Naive thymus-derived CD4-positive, alpha-beta T cell (primary cell): ENCODE measurements at regions of chr1 and their contacts with region 1.

Region 1: GRCh38 chr1:21782868-21783678 is at the start of gene USP48:
- DNase-seq: peak; percentile 95 to 98 (median 97)
- ATAC-seq: peak; percentile 92
- H3K4me3 ChIP-seq: peak within 1 kb of the TSS; percentile 93
- H3K4me3 Mint-ChIP-seq: peak within 1 kb of the TSS; percentile 92 to 99 (median 98)
- H3K27ac ChIP-seq: peak within 1 kb of the TSS; percentile 99
- H3K27ac Mint-ChIP-seq: peak within 1 kb of the TSS; percentile 99 to 100 (median 100)
- H3K4me1 ChIP-seq: peaks cover 19 to 23% of the 10 kb centered on the region in 2 donors
- H3K4me1 Mint-ChIP-seq: peaks cover 19 to 40% (median 34%) of the 10 kb centered on the region in 7 donors
- H3K27me3 ChIP-seq: no peaks in the 10 kb centered on the region
- H3K27me3 Mint-ChIP-seq: peaks cover 0 to 9% (median 0%) of the 10 kb centered on the region in 5 donors
- total RNA-seq, gene USP48: 74.7 to 107 (median 83.9) TPM

Region 2: GRCh38 chr1:19882111-19883071 is 1900.7 kb before region 1 on chr1 and contains the start of gene OTUD3:
- CTCF ChIA-PET with region 1: no interaction called
- POLR2A ChIA-PET with region 1: no interaction called
- intact Hi-C with region 1: loop called in 1 of 2 experiments (anchors 2 kb)
- DNase-seq: peak; percentile 87 to 97 (median 96)
- ATAC-seq: peak; percentile 100
- H3K4me3 ChIP-seq: peak within 1 kb of the TSS; percentile 66
- H3K4me3 Mint-ChIP-seq: peak within 1 kb of the TSS; percentile 77 to 95 (median 88)
- H3K27ac ChIP-seq: peak within 1 kb of the TSS; percentile 82
- H3K27ac Mint-ChIP-seq: peak within 1 kb of the TSS; percentile 3 to 88 (median 75)
- H3K4me1 ChIP-seq: peaks cover 15 to 23% of the 10 kb centered on the region in 2 donors
- H3K4me1 Mint-ChIP-seq: peaks cover 20 to 50% (median 47%) of the 10 kb centered on the region in 7 donors
- H3K27me3 ChIP-seq: no peaks in the 10 kb centered on the region
- H3K27me3 Mint-ChIP-seq: peaks cover 0 to 15% (median 6%) of the 10 kb centered on the region in 5 donors
- total RNA-seq, gene OTUD3: 13.1 to 23.6 (median 20.8) TPM

Region 3: GRCh38 chr1:21659099-21659923 is 123.8 kb before region 1 on chr1:
- CTCF ChIA-PET with region 1: no interaction called
- POLR2A ChIA-PET with region 1: no interaction called
- intact Hi-C with region 1: loop called (anchors 1 to 2 kb)
- DNase-seq: peak; percentile 73 to 91 (median 81)
- ATAC-seq: peak; percentile 99
- H3K4me3 ChIP-seq: peak overlapping the region; percentile 40
- H3K4me3 Mint-ChIP-seq: peak overlapping the region in 7 of 10 donors; percentile 18 to 66 (median 42)
- H3K27ac ChIP-seq: no peak overlapping the region
- H3K27ac Mint-ChIP-seq: peak overlapping the region in 1 of 9 donors; percentile 56
- H3K4me1 ChIP-seq: peaks cover 6% of the 10 kb centered on the region in 2 donors
- H3K4me1 Mint-ChIP-seq: peaks cover 0 to 9% (median 7%) of the 10 kb centered on the region in 7 donors
- H3K27me3 ChIP-seq: no peaks in the 10 kb centered on the region
- H3K27me3 Mint-ChIP-seq: peaks cover 14 to 30% (median 16%) of the 10 kb centered on the region in 5 donors

Region 4: DNA sequence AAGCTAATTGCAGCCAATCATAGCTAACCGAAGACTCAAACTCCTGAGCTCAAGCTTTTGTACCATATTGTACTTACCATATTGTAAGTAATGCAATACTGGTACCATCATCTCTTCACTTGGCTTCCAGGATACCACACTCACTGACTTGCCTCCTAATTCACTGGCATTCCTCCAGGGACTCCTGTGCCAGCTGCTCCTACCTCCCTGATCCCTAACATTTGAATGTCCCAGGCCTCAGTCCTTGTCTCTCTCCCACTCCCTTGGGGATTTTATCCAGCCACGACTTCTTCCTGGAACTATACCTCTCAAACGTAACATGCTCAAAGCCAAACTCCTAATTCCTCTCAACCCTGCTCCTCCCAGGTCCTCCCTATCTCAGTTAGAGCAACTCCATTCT is 34.0 kb before region 1 on chr1:
- CTCF ChIA-PET with region 1: no interaction called
- POLR2A ChIA-PET with region 1: no interaction called
- intact Hi-C with region 1: loop called in 1 of 2 experiments (anchors 5 kb)
- DNase-seq: no peak
- ATAC-seq: no peak
- H3K4me3 ChIP-seq: no peak overlapping the region
- H3K4me3 Mint-ChIP-seq: no peak overlapping the region
- H3K27ac ChIP-seq: no peak overlapping the region
- H3K27ac Mint-ChIP-seq: peak overlapping the region in 2 of 9 donors; percentile 53 to 66
- H3K4me1 ChIP-seq: no peaks in the 10 kb centered on the region
- H3K4me1 Mint-ChIP-seq: peaks cover 0 to 7% (median 0%) of the 10 kb centered on the region in 7 donors
- H3K27me3 ChIP-seq: no peaks in the 10 kb centered on the region
- H3K27me3 Mint-ChIP-seq: no peaks in the 10 kb centered on the region

Region 5: GRCh38 chr1:21834094-21834493 is 51.0 kb after region 1 on chr1:
- CTCF ChIA-PET with region 1: no interaction called
- POLR2A ChIA-PET with region 1: no interaction called
- intact Hi-C with region 1: no loop called
- DNase-seq: no peak
- ATAC-seq: no peak
- H3K4me3 ChIP-seq: no peak overlapping the region
- H3K4me3 Mint-ChIP-seq: no peak overlapping the region
- H3K27ac ChIP-seq: no peak overlapping the region
- H3K27ac Mint-ChIP-seq: no peak overlapping the region
- H3K4me1 ChIP-seq: no peaks in the 10 kb centered on the region
- H3K4me1 Mint-ChIP-seq: peaks cover 0 to 2% (median 0%) of the 10 kb centered on the region in 7 donors
- H3K27me3 ChIP-seq: no peaks in the 10 kb centered on the region
- H3K27me3 Mint-ChIP-seq: no peaks in the 10 kb centered on the region

Region 6: GRCh38 chr1:21956720-21957552 is 173.9 kb after region 1 on chr1:
- CTCF ChIA-PET with region 1: interaction called, 4 read pairs
- POLR2A ChIA-PET with region 1: interaction called, 10 read pairs
- intact Hi-C with region 1: loop called in 1 of 2 experiments (anchors 1 kb)
- DNase-seq: peak; percentile 21 to 84 (median 76)
- ATAC-seq: peak; percentile 96
- H3K4me3 ChIP-seq: peak overlapping the region; percentile 43
- H3K4me3 Mint-ChIP-seq: peak overlapping the region; percentile 65 to 86 (median 80)
- H3K27ac ChIP-seq: peak overlapping the region; percentile 62
- H3K27ac Mint-ChIP-seq: peak overlapping the region; percentile 77 to 99 (median 93)
- H3K4me1 ChIP-seq: peaks cover 8 to 31% of the 10 kb centered on the region in 2 donors
- H3K4me1 Mint-ChIP-seq: peaks cover 17 to 44% (median 29%) of the 10 kb centered on the region in 7 donors
- H3K27me3 ChIP-seq: no peaks in the 10 kb centered on the region
- H3K27me3 Mint-ChIP-seq: peaks cover 0 to 7% (median 2%) of the 10 kb centered on the region in 5 donors

Region 7: GRCh38 chr1:22052115-22053016 is 269.3 kb after region 1 on chr1 and contains the start of gene CDC42:
- CTCF ChIA-PET with region 1: no interaction called
- POLR2A ChIA-PET with region 1: interaction called, 4 read pairs
- intact Hi-C with region 1: loop called (anchors 1 kb)
- DNase-seq: peak; percentile 95 to 99 (median 98)
- ATAC-seq: peak; percentile 96
- H3K4me3 ChIP-seq: peak within 1 kb of the TSS; percentile 74
- H3K4me3 Mint-ChIP-seq: peak within 1 kb of the TSS; percentile 96 to 100 (median 99)
- H3K27ac ChIP-seq: peak within 1 kb of the TSS; percentile 98
- H3K27ac Mint-ChIP-seq: peak within 1 kb of the TSS; percentile 91 to 100 (median 99)
- H3K4me1 ChIP-seq: peaks cover 38 to 45% of the 10 kb centered on the region in 2 donors
- H3K4me1 Mint-ChIP-seq: peaks cover 50 to 79% (median 61%) of the 10 kb centered on the region in 7 donors
- H3K27me3 ChIP-seq: no peaks in the 10 kb centered on the region
- H3K27me3 Mint-ChIP-seq: peaks cover 0 to 2% (median 0%) of the 10 kb centered on the region in 5 donors
- total RNA-seq, gene CDC42: 186 to 385 (median 305) TPM

Region 8: DNA sequence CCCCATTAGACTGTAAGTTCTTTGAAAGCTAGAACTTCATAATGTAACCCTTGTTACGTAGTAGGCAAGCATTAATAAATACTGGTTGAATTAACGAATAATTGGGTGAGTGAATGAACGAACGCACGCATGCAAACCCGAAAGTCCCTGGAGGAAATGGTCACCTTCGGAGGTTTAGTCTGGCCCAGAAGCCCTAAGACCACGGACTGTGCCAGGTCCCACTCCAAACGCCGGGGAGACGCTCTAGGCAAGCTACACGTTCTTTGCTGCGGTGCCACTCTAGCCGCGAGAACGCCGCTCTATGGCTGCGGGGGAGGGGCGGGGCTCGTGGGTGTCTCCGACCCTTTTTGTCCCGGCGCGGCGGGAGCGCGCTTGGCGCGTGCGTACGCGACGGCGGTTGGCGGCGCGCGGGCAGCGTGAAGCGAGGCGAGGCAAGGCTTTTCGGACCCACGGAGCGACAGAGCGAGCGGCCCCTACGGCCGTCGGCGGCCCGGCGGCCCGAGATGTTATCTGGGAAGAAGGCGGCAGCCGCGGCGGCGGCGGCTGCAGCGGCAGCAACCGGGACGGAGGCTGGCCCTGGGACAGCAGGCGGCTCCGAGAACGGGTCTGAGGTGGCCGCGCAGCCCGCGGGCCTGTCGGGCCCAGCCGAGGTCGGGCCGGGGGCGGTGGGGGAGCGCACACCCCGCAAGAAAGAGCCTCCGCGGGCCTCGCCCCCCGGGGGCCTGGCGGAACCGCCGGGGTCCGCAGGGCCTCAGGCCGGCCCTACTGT is 1236.2 kb after region 1 on chr1 and contains the start of gene KDM1A:
- CTCF ChIA-PET with region 1: no interaction called
- POLR2A ChIA-PET with region 1: no interaction called
- intact Hi-C with region 1: loop called in 1 of 2 experiments (anchors 10 kb)
- DNase-seq: peak; percentile 88 to 95 (median 92)
- ATAC-seq: peak; percentile 99
- H3K4me3 ChIP-seq: peak within 1 kb of the TSS; percentile 84
- H3K4me3 Mint-ChIP-seq: peak within 1 kb of the TSS; percentile 87 to 98 (median 98)
- H3K27ac ChIP-seq: peak within 1 kb of the TSS; percentile 76
- H3K27ac Mint-ChIP-seq: peak within 1 kb of the TSS; percentile 86 to 98 (median 93)
- H3K4me1 ChIP-seq: peaks cover 4 to 14% of the 10 kb centered on the region in 2 donors
- H3K4me1 Mint-ChIP-seq: peaks cover 16 to 52% (median 46%) of the 10 kb centered on the region in 7 donors
- H3K27me3 ChIP-seq: no peaks in the 10 kb centered on the region
- H3K27me3 Mint-ChIP-seq: no peaks in the 10 kb centered on the region
- total RNA-seq, gene KDM1A: 40.6 to 56.0 (median 47.7) TPM